Vagina (tissue), 2 donors: ENCODE measurements at regions of chr2 and their contacts with region 1.

Region 1: DNA sequence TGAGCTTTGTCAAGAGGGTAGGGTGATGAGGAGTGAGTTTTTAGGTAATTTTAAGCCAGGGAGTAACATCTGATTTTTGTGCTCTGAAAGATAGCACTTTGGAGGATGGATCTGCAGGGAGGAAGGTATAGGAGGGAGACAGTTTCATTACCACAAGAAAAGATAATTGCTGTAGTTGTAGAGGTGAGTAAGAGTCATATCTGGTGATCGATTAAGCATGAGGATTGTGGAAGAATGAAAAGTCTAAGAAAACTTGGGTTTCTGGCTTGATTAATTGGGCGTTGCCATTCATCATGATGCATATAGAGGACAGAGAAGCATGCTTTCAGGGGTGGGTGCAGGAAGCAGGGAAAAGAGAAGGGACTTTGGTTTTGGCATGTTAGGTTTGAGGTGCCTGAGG is 18.5 kb downstream of the KCMF1 start:
- DNase-seq: no peak
- H3K4me3 ChIP-seq: no peak overlapping the region
- H3K27ac ChIP-seq: no peak overlapping the region
- H3K4me1 ChIP-seq: peaks cover 84% of the 10 kb centered on the region
- H3K27me3 ChIP-seq: no peaks in the 10 kb centered on the region
- CTCF ChIP-seq: no peak
- POLR2A ChIP-seq: no peak

Region 2: GRCh38 chr2:85199698-85200097 is 210.3 kb after region 1 on chr2:
- intact Hi-C with region 1: loop called (anchors 5 kb)
- DNase-seq: no peak
- H3K4me3 ChIP-seq: no peak overlapping the region
- H3K27ac ChIP-seq: no peak overlapping the region
- H3K4me1 ChIP-seq: peaks cover 17% of the 10 kb centered on the region
- H3K27me3 ChIP-seq: no peaks in the 10 kb centered on the region
- CTCF ChIP-seq: no peak
- POLR2A ChIP-seq: no peak